Esophagus squamous epithelium (tissue), 5 donors: ENCODE measurements at regions of chr1 and their contacts with region 1.

Region 1: GRCh38 chr1:29124366-29125236 is 898 bp upstream of the TMEM200B start:
- DNase-seq: no peak
- H3K4me3 ChIP-seq: peak overlapping the region; percentile 28 to 82 (median 66)
- H3K27ac ChIP-seq: peak overlapping the region; percentile 79 to 97 (median 90)
- H3K4me1 ChIP-seq: peaks cover 28 to 57% (median 38%) of the 10 kb centered on the region in 3 donors
- H3K27me3 ChIP-seq: peaks cover 0 to 49% (median 0%) of the 10 kb centered on the region in 4 donors
- CTCF ChIP-seq: peak in 5 of 6 experiments; percentile 47 to 85 (median 77)
- POLR2A ChIP-seq: peak in 2 of 4 donors; percentile 55 to 72

Region 2: DNA sequence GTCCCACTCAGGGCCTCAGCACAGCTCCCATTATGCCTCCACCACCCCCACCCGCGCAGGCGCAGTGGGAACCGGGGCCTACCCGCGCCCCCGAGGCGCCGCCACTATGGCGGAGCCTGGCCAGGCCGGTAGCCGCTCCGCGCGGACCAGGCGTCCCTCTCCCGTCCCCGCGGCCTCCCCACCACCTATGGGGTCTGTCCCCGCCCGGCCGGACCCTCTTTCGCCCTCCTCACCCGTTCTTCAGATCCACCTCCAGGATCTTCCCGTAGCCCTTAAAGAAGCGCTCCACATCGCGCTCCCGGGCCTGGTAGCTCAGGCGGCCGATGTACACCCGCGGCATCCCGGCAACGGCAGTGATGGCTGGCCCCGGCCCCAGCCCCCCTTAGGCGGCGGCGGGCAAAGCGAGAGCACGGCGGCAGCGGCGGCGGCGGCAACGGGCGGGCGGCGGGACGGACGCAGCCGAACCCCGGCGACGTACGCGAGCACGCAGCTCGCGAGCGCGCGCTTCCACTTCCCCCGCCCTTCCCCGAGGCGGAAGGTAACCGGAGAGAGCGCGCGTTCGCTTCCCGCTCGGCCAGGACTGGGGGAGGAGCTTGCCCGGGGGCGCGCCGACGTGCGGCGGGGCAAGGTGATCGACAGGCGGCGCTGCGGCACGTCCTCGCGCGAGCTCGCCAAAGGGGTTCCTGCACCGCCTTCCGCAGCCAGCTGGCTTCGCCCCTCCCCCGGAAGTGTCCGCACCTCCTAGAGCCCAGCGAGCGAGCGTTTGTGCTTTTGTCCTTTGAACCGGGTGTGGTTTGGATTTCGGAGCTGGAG is 57.0 kb after region 1 on chr1 and contains the start of gene SRSF4:
- intact Hi-C with region 1: loop called (anchors 10 kb)
- DNase-seq: peak; percentile 90
- H3K4me3 ChIP-seq: peak within 1 kb of the TSS; percentile 90 to 100 (median 94)
- H3K27ac ChIP-seq: peak within 1 kb of the TSS; percentile 99 to 100 (median 100)
- H3K4me1 ChIP-seq: peaks cover 27 to 54% (median 40%) of the 10 kb centered on the region in 3 donors
- H3K27me3 ChIP-seq: no peaks in the 10 kb centered on the region
- CTCF ChIP-seq: peak; percentile 67 to 90 (median 86)
- POLR2A ChIP-seq: peak in 3 of 4 donors; percentile 57 to 97 (median 87)
- total RNA-seq, gene SRSF4: 41.4 to 82.6 (median 56.4) TPM